CD8-positive, alpha-beta T cell (primary cell): ENCODE measurements at regions of chr5 and their contacts with region 1.

Region 1: DNA sequence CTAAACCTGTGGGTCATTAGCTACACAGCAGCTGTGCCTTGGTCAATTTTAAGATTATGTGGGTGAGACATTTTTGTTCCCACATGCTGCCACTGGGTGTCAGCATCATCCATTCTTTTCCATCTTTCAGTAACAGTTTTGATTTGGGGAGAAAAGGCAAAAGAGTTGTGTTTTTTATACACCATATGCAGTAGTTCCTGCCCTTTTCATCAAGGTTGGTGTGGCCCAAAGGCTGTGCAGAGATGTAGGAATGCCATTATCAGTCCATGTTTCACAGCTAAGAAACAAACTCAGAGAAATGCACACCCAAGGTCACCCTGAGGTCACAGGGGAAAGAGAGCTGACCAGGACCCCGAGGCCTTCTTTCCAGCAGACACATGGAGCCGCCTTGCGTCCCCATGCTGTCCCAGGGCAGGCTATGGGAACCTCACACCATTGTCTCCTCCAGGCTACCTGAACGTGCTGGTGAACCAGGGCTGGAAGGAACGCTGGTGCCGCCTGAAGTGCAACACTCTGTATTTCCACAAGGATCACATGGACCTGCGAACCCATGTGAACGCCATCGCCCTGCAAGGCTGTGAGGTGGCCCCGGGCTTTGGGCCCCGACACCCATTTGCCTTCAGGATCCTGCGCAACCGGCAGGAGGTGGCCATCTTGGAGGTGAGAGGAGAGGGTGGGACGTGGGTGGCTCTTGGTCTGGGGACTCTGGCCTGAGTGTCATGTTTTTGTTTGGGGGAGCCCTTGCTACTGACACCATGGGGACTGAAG is 27.8 kb upstream of the GRPEL2 start:
- DNase-seq: peak in 7 of 9 experiments; percentile 14 to 71 (median 38)
- ATAC-seq: peak; percentile 69
- H3K4me3 ChIP-seq: no peak overlapping the region
- H3K4me3 Mint-ChIP-seq: no peak overlapping the region
- H3K27ac ChIP-seq: no peak overlapping the region
- H3K27ac Mint-ChIP-seq: no peak overlapping the region
- H3K4me1 ChIP-seq: no peaks in the 10 kb centered on the region
- H3K4me1 Mint-ChIP-seq: peaks cover 3% of the 10 kb centered on the region
- H3K27me3 ChIP-seq: no peaks in the 10 kb centered on the region
- H3K27me3 Mint-ChIP-seq: no peaks in the 10 kb centered on the region
- CTCF ChIP-seq: peak; percentile 90

Region 2: DNA sequence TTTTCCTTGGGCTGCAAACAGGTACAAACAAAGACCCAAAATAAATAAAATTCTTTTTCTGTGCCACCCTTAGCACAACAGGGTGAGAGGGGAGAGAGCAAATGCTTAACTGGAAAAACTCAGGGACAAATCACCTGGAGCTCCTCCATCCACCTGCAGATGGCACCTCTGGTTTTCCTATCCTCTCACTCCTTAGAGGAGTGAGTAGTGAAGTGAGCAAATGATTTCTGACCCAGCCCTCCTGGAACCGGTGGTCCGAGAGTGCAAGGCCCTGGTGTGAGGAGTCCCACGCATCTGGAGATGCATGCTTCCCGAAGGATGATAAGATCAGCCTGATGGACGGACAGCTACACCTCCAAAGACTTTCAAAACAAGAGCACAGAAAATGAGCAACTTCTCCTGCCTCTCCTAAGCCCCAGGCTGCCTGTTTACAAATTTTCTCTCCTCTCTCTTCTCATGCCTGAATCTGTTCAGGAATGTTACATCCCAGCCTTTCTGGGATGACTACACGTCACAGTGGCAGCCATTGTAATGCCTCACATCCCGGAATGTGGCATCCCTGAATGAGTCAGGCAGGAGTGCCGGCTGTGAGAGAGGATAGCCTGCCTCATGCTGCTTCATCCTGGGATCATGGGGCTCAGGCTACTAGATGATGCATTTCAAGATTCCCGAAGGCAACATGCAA is 404.6 kb before region 1 on chr5:
- CTCF ChIA-PET with region 1: no interaction called
- POLR2A ChIA-PET with region 1: no interaction called
- intact Hi-C with region 1: no loop called
- DNase-seq: no peak
- ATAC-seq: no peak
- H3K4me3 ChIP-seq: no peak overlapping the region
- H3K4me3 Mint-ChIP-seq: no peak overlapping the region
- H3K27ac ChIP-seq: no peak overlapping the region
- H3K27ac Mint-ChIP-seq: no peak overlapping the region
- H3K4me1 ChIP-seq: no peaks in the 10 kb centered on the region
- H3K4me1 Mint-ChIP-seq: peaks cover 10% of the 10 kb centered on the region
- H3K27me3 ChIP-seq: no peaks in the 10 kb centered on the region
- H3K27me3 Mint-ChIP-seq: no peaks in the 10 kb centered on the region
- CTCF ChIP-seq: no peak

Region 3: GRCh38 chr5:149074106-149074505 is 243.4 kb before region 1 on chr5:
- CTCF ChIA-PET with region 1: no interaction called
- POLR2A ChIA-PET with region 1: no interaction called
- intact Hi-C with region 1: no loop called
- DNase-seq: no peak
- ATAC-seq: no peak
- H3K4me3 ChIP-seq: no peak overlapping the region
- H3K4me3 Mint-ChIP-seq: no peak overlapping the region
- H3K27ac ChIP-seq: no peak overlapping the region
- H3K27ac Mint-ChIP-seq: no peak overlapping the region
- H3K4me1 ChIP-seq: no peaks in the 10 kb centered on the region
- H3K4me1 Mint-ChIP-seq: no peaks in the 10 kb centered on the region
- H3K27me3 ChIP-seq: no peaks in the 10 kb centered on the region
- H3K27me3 Mint-ChIP-seq: peaks cover 22% of the 10 kb centered on the region
- CTCF ChIP-seq: no peak

Region 4: GRCh38 chr5:149298842-149299404 is 18.5 kb before region 1 on chr5:
- CTCF ChIA-PET with region 1: interaction called, 17 read pairs
- POLR2A ChIA-PET with region 1: no interaction called
- intact Hi-C with region 1: no loop called
- DNase-seq: no peak
- ATAC-seq: no peak
- H3K4me3 ChIP-seq: no peak overlapping the region
- H3K4me3 Mint-ChIP-seq: no peak overlapping the region
- H3K27ac ChIP-seq: no peak overlapping the region
- H3K27ac Mint-ChIP-seq: no peak overlapping the region
- H3K4me1 ChIP-seq: peaks cover 52% of the 10 kb centered on the region
- H3K4me1 Mint-ChIP-seq: peaks cover 39% of the 10 kb centered on the region
- H3K27me3 ChIP-seq: peaks cover 0 to 2% of the 10 kb centered on the region in 2 experiments
- H3K27me3 Mint-ChIP-seq: peaks cover 2% of the 10 kb centered on the region
- CTCF ChIP-seq: no peak

Region 5: GRCh38 chr5:149352169-149352568 is 34.7 kb after region 1 on chr5:
- CTCF ChIA-PET with region 1: interaction called, 20 read pairs
- POLR2A ChIA-PET with region 1: no interaction called
- intact Hi-C with region 1: no loop called
- DNase-seq: no peak
- ATAC-seq: no peak
- H3K4me3 ChIP-seq: no peak overlapping the region
- H3K4me3 Mint-ChIP-seq: no peak overlapping the region
- H3K27ac ChIP-seq: no peak overlapping the region
- H3K27ac Mint-ChIP-seq: no peak overlapping the region
- H3K4me1 ChIP-seq: peaks cover 39% of the 10 kb centered on the region
- H3K4me1 Mint-ChIP-seq: peaks cover 73% of the 10 kb centered on the region
- H3K27me3 ChIP-seq: no peaks in the 10 kb centered on the region
- H3K27me3 Mint-ChIP-seq: no peaks in the 10 kb centered on the region
- CTCF ChIP-seq: no peak

Region 6: GRCh38 chr5:149367249-149367971 is 49.9 kb after region 1 on chr5:
- CTCF ChIA-PET with region 1: interaction called, 541 read pairs
- POLR2A ChIA-PET with region 1: no interaction called
- intact Hi-C with region 1: loop called (anchors 1 kb)
- DNase-seq: peak; percentile 31 to 70 (median 59)
- ATAC-seq: peak; percentile 67
- H3K4me3 ChIP-seq: no peak overlapping the region
- H3K4me3 Mint-ChIP-seq: no peak overlapping the region
- H3K27ac ChIP-seq: no peak overlapping the region
- H3K27ac Mint-ChIP-seq: peak overlapping the region; percentile 41
- H3K4me1 ChIP-seq: peaks cover 8% of the 10 kb centered on the region
- H3K4me1 Mint-ChIP-seq: peaks cover 24% of the 10 kb centered on the region
- H3K27me3 ChIP-seq: no peaks in the 10 kb centered on the region
- H3K27me3 Mint-ChIP-seq: no peaks in the 10 kb centered on the region
- CTCF ChIP-seq: peak; percentile 57

Region 7: DNA sequence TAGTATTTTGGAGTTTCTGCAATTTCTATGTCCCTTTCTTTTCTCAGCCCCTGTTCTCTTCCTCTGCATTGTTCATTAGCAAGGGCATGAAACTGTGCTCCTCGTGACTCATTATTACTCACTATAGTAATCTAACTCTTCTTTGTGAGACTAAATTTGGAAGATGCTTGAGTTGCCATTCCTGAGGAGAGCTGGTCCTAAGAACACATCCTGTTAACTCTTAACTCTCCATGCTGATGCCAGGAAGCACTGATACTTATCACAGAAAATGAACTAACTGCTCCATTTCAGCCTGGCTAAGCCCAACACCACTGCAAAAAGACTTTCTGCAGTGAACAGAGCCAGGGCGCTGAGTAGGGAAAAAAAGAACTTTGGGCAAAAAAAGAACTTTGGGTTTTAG is 244.4 kb after region 1 on chr5:
- CTCF ChIA-PET with region 1: interaction called, 7 read pairs
- POLR2A ChIA-PET with region 1: no interaction called
- intact Hi-C with region 1: loop called (anchors 1 kb)
- DNase-seq: no peak
- ATAC-seq: no peak
- H3K4me3 ChIP-seq: no peak overlapping the region
- H3K4me3 Mint-ChIP-seq: no peak overlapping the region
- H3K27ac ChIP-seq: no peak overlapping the region
- H3K27ac Mint-ChIP-seq: no peak overlapping the region
- H3K4me1 ChIP-seq: peaks cover 4% of the 10 kb centered on the region
- H3K4me1 Mint-ChIP-seq: peaks cover 17% of the 10 kb centered on the region
- H3K27me3 ChIP-seq: no peaks in the 10 kb centered on the region
- H3K27me3 Mint-ChIP-seq: no peaks in the 10 kb centered on the region
- CTCF ChIP-seq: no peak

Region 8: GRCh38 chr5:151234476-151235238 is 1917.2 kb after region 1 on chr5:
- CTCF ChIA-PET with region 1: no interaction called
- POLR2A ChIA-PET with region 1: no interaction called
- intact Hi-C with region 1: no loop called
- DNase-seq: peak in 6 of 9 experiments; percentile 26 to 70 (median 41)
- ATAC-seq: peak; percentile 61
- H3K4me3 ChIP-seq: peak overlapping the region in 1 of 2 experiments; percentile 21
- H3K4me3 Mint-ChIP-seq: peak overlapping the region; percentile 75
- H3K27ac ChIP-seq: peak overlapping the region in 1 of 2 experiments; percentile 50
- H3K27ac Mint-ChIP-seq: peak overlapping the region; percentile 87
- H3K4me1 ChIP-seq: peaks cover 31% of the 10 kb centered on the region
- H3K4me1 Mint-ChIP-seq: peaks cover 50% of the 10 kb centered on the region
- H3K27me3 ChIP-seq: no peaks in the 10 kb centered on the region
- H3K27me3 Mint-ChIP-seq: no peaks in the 10 kb centered on the region
- CTCF ChIP-seq: no peak